WTC11 (cell line): ENCODE measurements at regions of chr5 and their contacts with region 1.

Region 1: DNA sequence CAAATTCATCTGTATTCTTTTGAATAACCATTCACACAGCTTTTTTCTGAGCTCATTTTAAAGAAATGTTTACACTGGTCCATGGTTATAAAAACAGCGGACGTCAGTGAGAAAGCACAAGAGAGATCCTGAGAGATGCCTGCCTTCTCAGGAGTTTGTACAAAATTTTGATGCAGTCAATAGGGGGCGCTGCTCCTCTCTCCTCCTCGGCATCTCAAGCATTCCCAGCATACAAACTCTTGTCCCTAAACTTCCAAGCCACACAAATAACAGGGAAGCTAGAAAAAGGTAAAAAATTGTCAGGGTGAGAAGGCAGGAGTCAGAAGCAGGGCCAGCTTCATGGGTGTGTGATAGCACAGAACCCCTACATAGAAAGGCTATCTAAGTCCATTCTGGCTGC is 11.2 kb upstream of the CCDC152 start:
- DNase-seq: peak; percentile 67
- ATAC-seq: peak; percentile 91
- H3K4me3 Mint-ChIP-seq: no peak overlapping the region
- H3K27ac Mint-ChIP-seq: peak overlapping the region; percentile 27; the same call in 1 of the 2 replicates
- H3K4me1 Mint-ChIP-seq: peaks cover 2% of the 10 kb centered on the region; the same call in 1 of the 2 replicates
- H3K27me3 Mint-ChIP-seq: no peaks in the 10 kb centered on the region
- CTCF ChIP-seq: peak; percentile 86

Region 2: DNA sequence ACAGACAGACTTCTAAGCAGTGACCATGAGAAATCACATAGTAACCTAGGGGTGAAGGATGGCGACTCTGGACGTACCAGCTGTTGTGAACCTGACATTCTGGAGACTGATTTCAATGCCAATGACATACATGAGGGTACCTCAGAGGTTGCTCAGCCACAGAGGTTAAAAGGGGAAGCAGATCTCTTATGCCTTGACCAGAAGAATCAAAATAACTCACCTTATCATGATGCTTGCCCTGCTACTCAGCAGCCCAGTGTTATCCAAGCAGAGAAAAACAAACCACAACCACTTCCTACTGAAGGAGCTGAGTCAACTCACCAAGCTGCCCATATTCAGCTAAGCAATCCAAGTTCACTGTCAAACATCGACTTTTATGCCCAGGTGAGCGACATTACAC is 26.8 kb before region 1 on chr5:
- CTCF ChIA-PET with region 1: interaction called, 11 read pairs
- POLR2A ChIA-PET with region 1: no interaction called
- DNase-seq: no peak
- ATAC-seq: no peak
- H3K4me3 Mint-ChIP-seq: no peak overlapping the region
- H3K27ac Mint-ChIP-seq: no peak overlapping the region
- H3K4me1 Mint-ChIP-seq: no peaks in the 10 kb centered on the region
- H3K27me3 Mint-ChIP-seq: no peaks in the 10 kb centered on the region
- CTCF ChIP-seq: no peak

Region 3: DNA sequence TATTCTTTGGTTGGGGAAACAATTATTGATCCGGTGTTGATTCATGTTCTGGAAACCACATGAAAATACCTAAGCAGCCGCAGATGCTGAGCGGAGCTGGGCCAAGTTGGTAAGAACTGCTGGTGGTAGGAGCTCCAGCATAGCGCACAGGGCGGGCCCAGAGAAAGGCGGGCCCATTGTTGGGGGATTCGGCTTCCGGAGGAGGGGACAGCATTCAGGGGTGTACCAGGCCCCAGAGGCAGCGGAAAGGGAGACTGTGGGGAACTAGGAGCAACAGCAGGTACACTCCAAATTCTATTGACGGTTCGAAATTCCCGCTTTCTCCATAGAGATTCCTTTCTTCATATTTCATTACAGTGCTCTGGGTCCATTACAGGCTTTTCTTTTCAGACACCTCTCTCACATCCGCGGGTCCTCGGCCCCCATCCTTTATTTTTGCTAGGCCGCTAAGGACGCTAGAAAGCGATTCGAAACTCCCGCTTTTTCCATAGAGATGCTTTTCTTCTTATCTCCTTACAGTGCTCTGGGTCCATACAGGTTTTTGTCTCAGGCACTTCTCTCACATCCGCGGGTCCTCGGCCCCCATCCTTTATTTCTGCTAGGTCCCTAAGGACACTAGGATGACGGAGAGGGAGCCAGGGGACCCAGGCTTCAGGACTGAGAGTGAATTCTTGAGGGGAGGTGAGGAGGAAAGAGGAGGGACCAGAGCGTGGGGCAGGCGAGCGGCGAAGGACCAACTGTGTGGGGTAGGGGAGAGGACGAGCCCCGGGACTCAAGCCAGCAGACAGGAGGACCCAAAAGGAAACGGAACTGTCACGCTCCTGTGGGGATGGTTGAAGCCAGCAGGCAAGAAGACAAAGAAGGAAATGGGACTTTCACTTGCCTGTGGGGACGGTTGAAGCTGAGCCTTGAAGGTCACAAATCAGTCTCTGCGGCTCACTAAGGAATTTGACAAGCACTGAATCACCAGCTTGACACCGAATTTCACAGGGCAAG is 11.5 kb after region 1 on chr5 and contains the start of gene CCDC152:
- CTCF ChIA-PET with region 1: interaction called, 11 read pairs
- POLR2A ChIA-PET with region 1: no interaction called
- DNase-seq: peak; percentile 78
- ATAC-seq: peak; percentile 100
- H3K4me3 Mint-ChIP-seq: peak within 1 kb of the TSS; percentile 93
- H3K27ac Mint-ChIP-seq: peak within 1 kb of the TSS; percentile 87
- H3K4me1 Mint-ChIP-seq: peaks cover 12% of the 10 kb centered on the region
- H3K27me3 Mint-ChIP-seq: no peaks in the 10 kb centered on the region
- CTCF ChIP-seq: no peak
- total RNA-seq, gene CCDC152: 15.1 to 19.0 TPM (median 18.8 TPM) in 3 replicates

Region 4: GRCh38 chr5:42798284-42799240 is 53.1 kb after region 1 on chr5:
- CTCF ChIA-PET with region 1: no interaction called
- POLR2A ChIA-PET with region 1: no interaction called
- DNase-seq: no peak
- ATAC-seq: no peak
- H3K4me3 Mint-ChIP-seq: no peak overlapping the region
- H3K27ac Mint-ChIP-seq: no peak overlapping the region
- H3K4me1 Mint-ChIP-seq: no peaks in the 10 kb centered on the region
- H3K27me3 Mint-ChIP-seq: no peaks in the 10 kb centered on the region
- CTCF ChIP-seq: no peak